ENCODE measurements at regions of chr21 and their contacts with region 1.

Region 1: DNA sequence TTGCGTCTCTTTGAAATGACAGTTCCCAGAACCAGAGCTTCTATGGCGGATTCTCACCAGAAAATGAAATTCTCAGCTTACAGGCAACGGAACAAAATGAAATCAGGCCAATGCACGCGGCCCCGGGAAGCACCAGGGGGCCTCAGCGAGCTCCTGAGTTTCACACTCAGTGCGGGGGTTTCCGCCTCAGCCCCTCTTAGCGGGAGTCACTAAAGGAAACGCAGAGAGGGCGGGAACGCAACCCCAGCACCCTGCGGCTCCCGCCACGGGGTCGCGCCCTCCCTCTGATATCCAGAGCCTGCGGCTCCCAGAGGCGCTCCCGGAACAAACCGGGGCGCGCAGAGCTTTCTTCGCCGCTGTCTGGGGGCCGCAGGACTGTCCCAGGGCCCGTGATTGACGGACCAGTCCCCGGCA is 7.9 kb upstream of the COL6A1 start:
- DNase-seq: peak; percentile 83 to 91
- ATAC-seq: peak; percentile 32 to 60 (median 52)
- H3K4me3 ChIP-seq: peak overlapping the region; percentile 22 to 62 (median 55)
- H3K27ac ChIP-seq: peak overlapping the region; percentile 93 to 99 (median 97)
- H3K4me1 ChIP-seq: peaks cover 21 to 77% (median 59%) of the 10 kb centered on the region in 9 donors
- H3K27me3 ChIP-seq: peaks cover 0 to 54% (median 0%) of the 10 kb centered on the region in 7 donors
- CTCF ChIP-seq: peak; percentile 65 to 84 (median 76)

Region 2: GRCh38 chr21:46048926-46049889 is 75.5 kb after region 1 on chr21:
- intact Hi-C with region 1: no loop called
- DNase-seq: peak; percentile 84 to 91
- ATAC-seq: peak; percentile 85 to 97 (median 94)
- H3K4me3 ChIP-seq: no peak overlapping the region
- H3K27ac ChIP-seq: peak overlapping the region; percentile 48 to 87 (median 81)
- H3K4me1 ChIP-seq: peaks cover 0 to 30% (median 12%) of the 10 kb centered on the region in 9 donors
- H3K27me3 ChIP-seq: peaks cover 0 to under 1% (median 0%) of the 10 kb centered on the region in 7 donors
- CTCF ChIP-seq: no peak

Region 3: GRCh38 chr21:46060596-46061061 is 87.0 kb after region 1 on chr21:
- intact Hi-C with region 1: loop called in 1 of 10 experiments (anchors 5 kb)
- DNase-seq: peak; percentile 70 to 88
- ATAC-seq: peak; percentile 51 to 77 (median 72)
- H3K4me3 ChIP-seq: no peak overlapping the region
- H3K27ac ChIP-seq: peak overlapping the region in 9 of 10 donors; percentile 62 to 88 (median 81)
- H3K4me1 ChIP-seq: peaks cover 0 to 45% (median 29%) of the 10 kb centered on the region in 9 donors
- H3K27me3 ChIP-seq: peaks cover 0 to 36% (median 0%) of the 10 kb centered on the region in 7 donors
- CTCF ChIP-seq: no peak

Region 4: GRCh38 chr21:46097336-46098293 is 123.9 kb after region 1 on chr21 and contains the start of gene COL6A2:
- intact Hi-C with region 1: loop called (anchors 2 to 10 kb)
- DNase-seq: peak; percentile 64 to 77
- ATAC-seq: peak; percentile 77 to 94 (median 90)
- H3K4me3 ChIP-seq: peak within 1 kb of the TSS; percentile 64 to 90 (median 82)
- H3K27ac ChIP-seq: peak within 1 kb of the TSS; percentile 79 to 97 (median 93)
- H3K4me1 ChIP-seq: peaks cover 4 to 49% (median 16%) of the 10 kb centered on the region in 9 donors
- H3K27me3 ChIP-seq: peaks cover 0 to 54% (median 0%) of the 10 kb centered on the region in 7 donors
- CTCF ChIP-seq: peak in 8 of 9 donors; percentile 22 to 68 (median 48)
- total RNA-seq, gene COL6A2: 76.6 to 370 (median 119) TPM

Region 5: DNA sequence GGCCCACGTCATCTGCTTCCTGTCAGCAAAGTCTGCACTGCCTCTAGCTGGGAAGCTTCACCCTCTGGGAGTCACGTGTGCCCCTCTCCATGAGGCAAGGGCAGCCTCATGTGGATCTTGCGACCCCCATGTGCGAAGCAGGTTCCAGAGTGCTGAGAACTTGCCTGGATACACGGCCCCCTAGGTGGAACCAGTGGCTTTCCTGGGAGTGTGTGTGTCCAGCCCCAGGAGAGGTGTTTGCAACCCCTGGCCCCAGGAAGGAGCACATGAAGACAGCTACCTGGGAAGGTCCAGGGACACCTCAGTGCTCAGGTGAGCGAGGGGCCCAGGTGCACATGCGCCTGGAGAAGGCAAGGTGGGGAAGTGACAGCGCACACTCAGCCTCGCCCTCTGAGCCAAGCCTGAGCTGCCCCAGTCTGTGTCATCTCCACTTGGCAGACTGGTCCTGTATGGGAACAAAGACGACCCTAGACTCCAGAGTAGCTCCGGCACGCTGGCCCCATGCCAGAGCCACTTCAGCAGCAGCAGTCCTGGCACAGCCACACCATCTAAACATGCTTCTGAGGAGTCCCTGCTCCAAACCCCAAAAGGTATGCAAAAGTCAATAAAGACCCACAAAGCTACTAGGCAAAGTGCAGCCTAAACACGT is 246.0 kb after region 1 on chr21:
- intact Hi-C with region 1: loop called in 1 of 10 experiments (anchors 5 kb)
- DNase-seq: peak in 1 of 2 donors; percentile 65
- ATAC-seq: peak in 5 of 8 donors; percentile 6 to 33 (median 30)
- H3K4me3 ChIP-seq: no peak overlapping the region
- H3K27ac ChIP-seq: no peak overlapping the region
- H3K4me1 ChIP-seq: peaks cover 0 to 33% (median 20%) of the 10 kb centered on the region in 9 donors
- H3K27me3 ChIP-seq: no peaks in the 10 kb centered on the region
- CTCF ChIP-seq: no peak

Region 6: GRCh38 chr21:46228345-46229051 is 254.8 kb after region 1 on chr21 and contains the start of gene LSS:
- intact Hi-C with region 1: loop called in 3 of 10 experiments (anchors 2 to 5 kb)
- DNase-seq: peak; percentile 96 to 99
- ATAC-seq: peak; percentile 94 to 97 (median 96)
- H3K4me3 ChIP-seq: peak within 1 kb of the TSS; percentile 67 to 100 (median 95)
- H3K27ac ChIP-seq: peak within 1 kb of the TSS; percentile 67 to 91 (median 87)
- H3K4me1 ChIP-seq: peaks cover 5 to 47% (median 31%) of the 10 kb centered on the region in 9 donors
- H3K27me3 ChIP-seq: no peaks in the 10 kb centered on the region
- CTCF ChIP-seq: no peak
- total RNA-seq, gene LSS: 30.5 to 74.7 (median 40.7) TPM

Region 7: GRCh38 chr21:46253610-46254124 is 280.0 kb after region 1 on chr21:
- intact Hi-C with region 1: loop called in 3 of 10 experiments (anchors 5 to 10 kb)
- DNase-seq: no peak
- ATAC-seq: no peak
- H3K4me3 ChIP-seq: no peak overlapping the region
- H3K27ac ChIP-seq: peak overlapping the region in 1 of 10 donors; percentile 20
- H3K4me1 ChIP-seq: peaks cover 0 to 26% (median 3%) of the 10 kb centered on the region in 9 donors
- H3K27me3 ChIP-seq: no peaks in the 10 kb centered on the region
- CTCF ChIP-seq: no peak

Region 8: DNA sequence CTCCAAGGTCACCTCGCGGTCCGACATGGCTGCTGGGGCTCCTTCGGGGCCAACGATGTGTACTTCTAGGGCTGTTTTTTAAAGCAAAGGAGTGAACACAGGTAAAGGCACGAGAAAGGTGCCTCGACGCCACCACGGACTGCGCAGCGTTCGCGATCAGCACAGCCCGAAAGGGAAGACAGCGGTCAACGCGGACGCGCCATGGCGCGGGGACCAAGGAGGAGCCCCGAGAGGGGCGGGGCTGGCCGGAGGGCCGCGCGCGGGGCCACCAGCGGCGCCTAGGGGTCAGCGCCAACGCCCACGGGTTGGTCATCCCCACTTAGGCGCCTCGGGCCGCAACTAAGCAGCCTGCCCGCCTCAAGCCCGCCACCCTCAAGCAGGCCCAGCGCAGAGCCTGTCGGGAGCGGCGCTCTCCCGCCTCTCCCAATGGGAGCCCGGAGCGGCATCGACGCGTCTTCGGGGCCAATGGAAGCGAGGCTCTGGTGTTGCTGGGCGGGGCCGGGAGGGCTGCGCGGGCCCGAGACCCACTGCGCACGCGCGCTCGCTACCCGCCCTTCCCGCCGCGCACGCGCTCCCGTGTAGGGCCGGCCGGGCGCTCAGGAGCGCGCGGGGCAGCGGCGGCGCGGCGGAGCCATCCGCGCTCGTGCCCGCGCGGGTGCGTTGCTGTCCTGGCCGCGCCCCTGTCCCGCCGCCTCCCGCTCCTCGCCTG is 484.8 kb after region 1 on chr21 and contains the start of gene DIP2A:
- intact Hi-C with region 1: loop called in 1 of 10 experiments (anchors 10 kb)
- DNase-seq: peak; percentile 95 to 96
- ATAC-seq: peak; percentile 94 to 98 (median 97)
- H3K4me3 ChIP-seq: peak within 1 kb of the TSS; percentile 73 to 99 (median 94)
- H3K27ac ChIP-seq: peak within 1 kb of the TSS; percentile 94 to 98 (median 97)
- H3K4me1 ChIP-seq: peaks cover 6 to 82% (median 67%) of the 10 kb centered on the region in 9 donors
- H3K27me3 ChIP-seq: no peaks in the 10 kb centered on the region
- CTCF ChIP-seq: peak in 2 of 9 donors; percentile 5 to 9
- total RNA-seq, gene DIP2A: 19.7 to 24.9 (median 22.9) TPM

Measured in heart right ventricle (tissue), 16 donors.